WTC11 (cell line): ENCODE measurements at regions of chr1 and their contacts with region 1.

Region 1: DNA sequence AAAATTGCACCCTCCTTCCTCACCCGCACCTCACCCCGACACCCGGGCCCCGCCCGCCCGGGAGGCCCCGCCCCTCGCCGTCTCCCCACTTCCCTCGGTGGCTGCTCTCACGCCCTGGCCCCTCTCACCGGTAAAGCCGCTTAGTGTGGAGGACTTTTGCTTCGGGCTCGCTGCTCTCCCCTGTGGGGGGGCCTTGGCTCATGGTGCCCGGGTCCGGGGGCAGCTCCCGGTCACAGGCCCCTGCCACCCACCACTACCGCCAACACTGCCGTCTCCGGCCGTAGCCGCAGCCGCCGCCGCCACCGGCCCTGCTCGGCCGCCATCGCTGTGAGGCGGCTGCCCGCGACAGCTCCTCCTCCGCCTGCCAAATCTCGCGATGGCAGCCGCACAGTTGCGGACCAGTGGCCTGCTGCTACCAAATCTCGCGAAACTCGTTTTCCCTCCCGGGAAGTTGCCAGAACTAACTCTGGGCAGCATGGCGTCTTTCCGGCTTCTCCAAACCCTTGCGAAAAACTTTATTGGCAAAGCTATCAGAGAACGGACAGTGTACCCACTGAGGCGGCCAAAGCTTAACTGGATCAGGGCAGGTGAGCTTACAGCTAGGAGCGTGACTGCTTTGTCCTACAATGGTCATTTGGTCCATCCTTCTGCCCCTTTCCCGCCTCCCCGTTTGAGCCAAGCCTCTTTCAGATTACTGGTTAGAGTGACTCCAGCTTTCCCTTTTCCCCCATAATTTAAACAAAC is at the start of gene SMG5:
- DNase-seq: peak; percentile 97
- ATAC-seq: peak; percentile 94
- H3K4me3 Mint-ChIP-seq: peak within 1 kb of the TSS; percentile 97
- H3K27ac Mint-ChIP-seq: peak within 1 kb of the TSS; percentile 97
- H3K4me1 Mint-ChIP-seq: peaks cover 24% of the 10 kb centered on the region
- H3K27me3 Mint-ChIP-seq: no peaks in the 10 kb centered on the region
- CTCF ChIP-seq: no peak
- total RNA-seq, gene SMG5: 87.7 to 109 TPM (median 91.1 TPM) in 3 replicates

Region 2: DNA sequence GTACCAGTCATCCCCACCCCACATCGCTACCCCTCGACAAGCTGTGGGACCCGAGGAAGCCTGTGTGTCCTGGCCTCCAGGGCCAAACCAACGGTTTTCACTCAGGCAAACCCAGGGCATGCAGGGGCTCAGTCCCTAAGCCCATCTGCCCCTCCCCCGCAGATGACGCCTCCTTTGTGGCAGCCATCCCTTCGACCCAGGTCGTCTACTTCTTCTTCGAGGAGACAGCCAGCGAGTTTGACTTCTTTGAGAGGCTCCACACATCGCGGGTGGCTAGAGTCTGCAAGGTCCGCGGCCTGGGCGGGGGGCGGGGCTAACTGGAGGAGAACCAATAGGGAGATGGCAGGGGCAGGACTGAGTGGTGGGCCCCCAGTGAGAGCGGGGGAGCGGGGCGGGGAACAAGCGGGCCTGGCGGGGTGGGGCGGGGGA is 121.9 kb before region 1 on chr1:
- CTCF ChIA-PET with region 1: no interaction called
- POLR2A ChIA-PET with region 1: no interaction called
- DNase-seq: peak; percentile 87
- ATAC-seq: peak; percentile 95
- H3K4me3 Mint-ChIP-seq: peak overlapping the region; percentile 71
- H3K27ac Mint-ChIP-seq: no peak overlapping the region
- H3K4me1 Mint-ChIP-seq: peaks cover 27% of the 10 kb centered on the region
- H3K27me3 Mint-ChIP-seq: no peaks in the 10 kb centered on the region
- CTCF ChIP-seq: no peak

Region 3: DNA sequence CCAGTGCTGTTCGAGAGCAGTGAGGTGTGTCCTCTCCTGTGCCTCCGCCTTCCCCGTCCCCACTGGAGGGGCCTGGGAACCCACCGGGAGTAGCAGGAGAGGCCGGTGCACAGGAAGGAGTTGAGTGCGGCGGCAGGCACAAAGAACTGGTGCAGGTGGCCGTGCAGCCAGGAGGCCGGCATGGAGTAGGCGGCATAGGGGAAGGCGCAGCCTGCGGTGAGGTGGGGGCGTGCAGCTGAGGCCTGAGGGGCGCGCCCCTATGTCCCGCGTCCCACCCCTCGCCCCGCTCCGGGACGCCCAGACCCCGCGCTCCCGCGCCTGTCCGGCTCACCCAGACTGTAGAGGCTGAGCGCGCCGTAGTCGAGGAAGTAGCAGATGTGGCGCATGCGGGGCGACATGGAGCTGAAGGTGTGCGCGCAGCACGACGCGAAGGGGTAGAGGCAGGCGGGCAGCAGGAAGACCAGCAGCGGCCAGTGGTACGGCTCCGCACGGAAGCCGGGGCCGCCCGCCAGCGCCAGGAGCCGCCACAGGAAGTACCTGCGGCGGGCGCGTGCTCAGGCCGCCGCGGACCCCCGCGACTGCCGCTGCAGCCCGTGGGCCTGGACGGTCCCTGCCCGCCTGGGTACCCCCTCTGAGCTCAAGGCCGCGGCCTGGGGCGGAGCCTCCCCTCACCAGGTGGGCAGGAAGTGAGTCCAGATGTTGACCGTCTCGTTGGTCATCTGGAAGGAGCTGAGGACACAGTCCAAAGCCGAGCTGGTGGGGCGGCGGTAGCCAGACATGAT is 37.0 kb before region 1 on chr1:
- CTCF ChIA-PET with region 1: interaction called, 11 read pairs
- POLR2A ChIA-PET with region 1: interaction called, 7 read pairs
- DNase-seq: peak; percentile 63
- ATAC-seq: peak; percentile 23
- H3K4me3 Mint-ChIP-seq: peak overlapping the region; percentile 74
- H3K27ac Mint-ChIP-seq: no peak overlapping the region
- H3K4me1 Mint-ChIP-seq: peaks cover 22% of the 10 kb centered on the region
- H3K27me3 Mint-ChIP-seq: peaks cover 4% of the 10 kb centered on the region
- CTCF ChIP-seq: no peak

Region 4: GRCh38 chr1:156368157-156368658 is 85.6 kb after region 1 on chr1:
- CTCF ChIA-PET with region 1: no interaction called
- POLR2A ChIA-PET with region 1: no interaction called
- DNase-seq: no peak
- ATAC-seq: no peak
- H3K4me3 Mint-ChIP-seq: no peak overlapping the region
- H3K27ac Mint-ChIP-seq: no peak overlapping the region
- H3K4me1 Mint-ChIP-seq: peaks cover 21% of the 10 kb centered on the region
- H3K27me3 Mint-ChIP-seq: peaks cover 35% of the 10 kb centered on the region
- CTCF ChIP-seq: no peak